Spleen (tissue), 13 donors: ENCODE measurements at regions of chr11 and their contacts with region 1.

Region 1: DNA sequence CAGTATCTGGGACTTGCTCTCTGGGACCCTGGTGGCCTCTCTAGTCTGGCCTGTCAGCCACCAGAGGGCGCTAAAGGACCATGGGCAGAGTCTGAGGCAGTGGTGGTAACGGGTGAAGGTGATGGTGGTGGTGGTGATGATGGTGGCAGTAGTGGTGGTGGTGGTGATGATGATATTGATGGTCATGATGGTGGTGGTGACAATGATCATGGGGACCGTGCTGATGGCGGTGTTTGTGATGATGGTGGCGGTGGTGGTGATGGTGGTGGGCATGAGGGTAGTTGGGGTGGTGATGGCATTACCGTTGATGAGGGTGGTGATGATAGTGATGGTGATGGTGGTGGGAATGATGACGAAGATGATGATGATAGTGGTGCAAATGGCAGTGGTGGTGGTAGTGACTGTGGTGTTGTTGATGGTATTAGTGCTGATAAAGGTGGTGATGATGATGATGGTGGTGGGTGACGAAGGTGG is 16.0 kb downstream of the TRPM5 start:
- DNase-seq: peak; percentile 95
- H3K4me3 ChIP-seq: no peak overlapping the region
- H3K27ac ChIP-seq: no peak overlapping the region
- H3K4me1 ChIP-seq: no peaks in the 10 kb centered on the region
- H3K27me3 ChIP-seq: peaks cover 0 to 17% (median 0%) of the 10 kb centered on the region in 7 donors
- CTCF ChIP-seq: peak; percentile 87 to 100 (median 94)
- POLR2A ChIP-seq: no peak

Region 2: GRCh38 chr11:2532704-2533586 is 104.6 kb after region 1 on chr11:
- intact Hi-C with region 1: loop called (anchors 1 kb)
- DNase-seq: peak; percentile 98
- H3K4me3 ChIP-seq: peak overlapping the region in 6 of 8 donors; percentile 5 to 46 (median 19)
- H3K27ac ChIP-seq: peak overlapping the region in 1 of 8 donors; percentile 12
- H3K4me1 ChIP-seq: peaks cover 14 to 35% (median 27%) of the 10 kb centered on the region in 6 donors
- H3K27me3 ChIP-seq: no peaks in the 10 kb centered on the region
- CTCF ChIP-seq: peak; percentile 97 to 100 (median 99)
- POLR2A ChIP-seq: no peak

Region 3: DNA sequence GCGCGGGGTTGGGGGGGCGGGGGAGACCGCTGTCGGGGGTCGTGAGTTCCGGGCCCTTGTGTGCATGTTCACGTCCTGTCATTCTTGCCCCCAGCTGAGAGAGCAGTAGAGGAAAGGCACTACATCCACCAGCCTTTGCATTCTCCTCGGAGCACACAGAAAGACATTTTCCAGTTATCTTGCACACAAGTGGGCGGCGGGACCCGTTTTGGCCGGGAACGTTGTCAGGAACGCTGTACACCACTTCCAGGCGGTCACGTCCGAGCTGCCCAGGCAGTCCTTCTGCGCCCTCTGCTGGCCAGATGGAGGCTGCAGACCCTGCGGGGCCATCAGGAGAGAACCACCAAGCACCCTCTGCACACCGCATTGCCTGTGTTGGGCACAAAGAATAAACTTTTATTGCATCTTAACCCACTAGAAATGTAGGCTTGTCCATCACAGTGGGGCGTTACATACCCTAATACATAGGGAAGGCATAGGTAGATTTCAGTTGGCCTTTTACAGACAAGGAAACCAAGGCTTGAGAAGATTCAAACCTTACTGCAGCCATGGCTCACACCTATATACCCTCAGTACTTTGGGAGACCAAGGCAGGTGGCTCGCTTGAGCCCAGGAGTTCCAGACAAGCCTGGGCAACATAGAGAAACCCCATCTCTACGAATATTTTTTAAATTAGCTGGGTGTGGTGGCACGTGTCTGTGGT is 460.1 kb after region 1 on chr11:
- intact Hi-C with region 1: loop called (anchors 2 kb)
- DNase-seq: peak; percentile 97
- H3K4me3 ChIP-seq: peak overlapping the region in 1 of 8 donors; percentile 4
- H3K27ac ChIP-seq: no peak overlapping the region
- H3K4me1 ChIP-seq: peaks cover 14 to 80% (median 57%) of the 10 kb centered on the region in 6 donors
- H3K27me3 ChIP-seq: peaks cover 0 to 30% (median 11%) of the 10 kb centered on the region in 7 donors
- CTCF ChIP-seq: peak; percentile 90 to 99 (median 98)
- POLR2A ChIP-seq: no peak